Astrocyte of the cerebellum (primary cell): ENCODE measurements at regions of chr3 and their contacts with region 1.

Region 1: DNA sequence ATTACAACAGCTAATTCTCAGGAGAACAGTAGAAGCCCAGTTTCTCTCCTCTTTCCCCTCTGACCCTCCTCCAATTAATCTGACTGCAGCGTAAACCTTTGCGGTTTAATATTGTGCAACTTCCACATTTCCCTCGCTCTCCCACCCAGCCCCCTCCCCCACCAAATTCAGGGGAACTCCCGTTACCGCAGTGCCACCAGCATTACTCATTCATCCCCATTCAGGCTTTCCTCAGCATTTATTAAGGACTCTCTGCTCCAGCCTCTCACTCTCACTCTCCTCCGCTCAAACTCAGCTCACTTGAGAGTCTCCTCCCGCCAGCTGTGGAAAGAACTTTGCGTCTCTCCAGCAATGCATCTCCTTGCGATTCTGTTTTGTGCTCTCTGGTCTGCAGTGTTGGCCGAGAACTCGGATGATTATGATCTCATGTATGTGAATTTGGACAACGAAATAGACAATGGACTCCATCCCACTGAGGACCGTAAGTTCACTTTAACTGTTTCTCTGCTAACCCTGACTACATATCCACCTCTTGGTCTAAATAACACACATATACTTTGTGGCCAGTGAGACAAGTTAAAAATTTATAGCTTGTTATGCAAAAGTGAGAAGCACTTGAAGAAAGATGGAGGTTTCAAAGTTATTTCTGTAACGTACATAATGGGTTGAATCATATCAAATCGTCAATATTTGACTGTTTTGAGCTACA is at the start of gene PTX3:
- DNase-seq: peak; percentile 77
- H3K4me3 ChIP-seq: peak within 1 kb of the TSS; percentile 65
- CTCF ChIP-seq: no peak

Region 2: DNA sequence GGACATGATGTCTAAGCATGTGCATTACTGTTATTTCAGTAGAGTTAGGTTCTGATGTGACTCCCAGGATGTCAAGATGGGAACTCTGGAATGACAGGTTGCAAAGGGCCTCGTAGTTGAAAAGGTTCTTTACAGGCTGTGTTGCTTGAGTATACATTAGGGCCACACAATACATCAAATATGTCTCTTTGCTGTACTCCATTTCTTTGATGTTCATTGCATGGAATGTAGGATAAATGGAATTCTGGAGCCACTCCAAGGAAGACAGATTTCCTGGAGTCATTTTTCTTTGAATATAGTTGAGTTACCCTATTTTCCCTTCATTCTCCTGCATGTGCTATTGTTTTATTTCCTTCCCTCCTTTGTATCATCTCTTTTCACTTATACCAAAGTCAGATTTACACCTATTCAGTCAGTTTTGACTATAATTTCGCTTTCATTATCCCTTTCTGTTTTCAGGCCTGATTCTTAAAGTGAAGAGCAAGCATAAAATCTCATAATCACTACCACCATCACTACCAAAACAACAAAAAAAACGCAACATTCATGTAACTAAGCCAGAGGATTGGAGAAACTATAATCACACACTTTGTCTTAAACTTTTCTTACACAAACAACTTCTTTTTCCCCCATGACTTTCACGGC is 61.3 kb before region 1 on chr3:
- in situ Hi-C with region 1: loop called (anchors 5 kb)
- DNase-seq: no peak
- H3K4me3 ChIP-seq: no peak overlapping the region
- CTCF ChIP-seq: no peak